PC-9 (cell line): ENCODE measurements at regions of chr1 and their contacts with region 1.

Region 1: GRCh38 chr1:19918057-19918456 is 5.4 kb downstream of the PLA2G2E start:
- DNase-seq: peak; percentile 57 to 75
- H3K4me3 ChIP-seq: no peak overlapping the region
- H3K27ac ChIP-seq: no peak overlapping the region
- H3K4me1 ChIP-seq: peaks cover 26% of the 10 kb centered on the region
- H3K27me3 ChIP-seq: no peaks in the 10 kb centered on the region
- CTCF ChIP-seq: peak; percentile 87

Region 2: GRCh38 chr1:19661721-19662228 is 256.3 kb before region 1 on chr1:
- CTCF ChIA-PET with region 1: no interaction called
- POLR2A ChIA-PET with region 1: no interaction called
- intact Hi-C with region 1: loop called (anchors 5 kb)
- DNase-seq: peak in 1 of 2 experiments; percentile 28
- H3K4me3 ChIP-seq: no peak overlapping the region
- H3K27ac ChIP-seq: no peak overlapping the region
- H3K4me1 ChIP-seq: no peaks in the 10 kb centered on the region
- H3K27me3 ChIP-seq: no peaks in the 10 kb centered on the region
- CTCF ChIP-seq: peak; percentile 72

Region 3: DNA sequence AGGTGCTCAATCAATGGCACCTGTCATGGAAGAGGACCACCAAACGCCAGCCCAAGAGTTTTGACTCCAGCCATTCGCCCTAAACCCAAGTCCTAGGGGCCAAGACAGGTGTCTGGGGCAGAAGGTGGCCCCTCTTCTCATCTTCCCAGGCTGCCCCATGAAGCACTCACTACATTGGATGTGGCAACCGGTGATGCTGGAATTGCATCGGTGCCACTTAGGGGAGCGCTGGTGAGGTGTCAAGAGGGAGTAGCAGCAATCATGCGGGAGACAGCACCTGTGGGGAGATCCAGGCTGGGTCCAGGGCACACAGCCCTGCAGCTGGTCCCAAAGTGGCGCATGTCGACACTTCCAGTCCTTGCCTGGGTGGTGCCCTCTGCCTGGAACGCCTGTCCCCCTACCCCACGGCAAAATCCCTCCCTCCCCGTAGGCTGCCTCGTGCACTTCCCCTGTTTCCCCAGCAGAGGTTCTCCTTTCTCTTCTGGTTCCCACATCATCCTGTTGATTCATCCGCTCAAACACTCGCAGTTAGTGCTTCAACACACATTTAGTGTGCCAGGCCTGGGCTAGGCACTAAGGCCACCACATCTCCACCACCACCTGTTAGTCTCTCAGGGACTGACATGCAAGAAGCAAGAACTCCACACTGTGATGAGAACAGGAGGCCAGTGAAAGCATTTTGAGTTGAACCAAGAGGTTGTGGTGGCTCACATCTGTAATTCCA is 182.7 kb after region 1 on chr1:
- CTCF ChIA-PET with region 1: no interaction called
- POLR2A ChIA-PET with region 1: no interaction called
- intact Hi-C with region 1: loop called (anchors 2 kb)
- DNase-seq: peak; percentile 45 to 58
- H3K4me3 ChIP-seq: no peak overlapping the region
- H3K27ac ChIP-seq: no peak overlapping the region
- H3K4me1 ChIP-seq: peaks cover 31% of the 10 kb centered on the region
- H3K27me3 ChIP-seq: no peaks in the 10 kb centered on the region
- CTCF ChIP-seq: peak; percentile 82

Region 4: GRCh38 chr1:20493839-20494608 is 576.0 kb after region 1 on chr1:
- CTCF ChIA-PET with region 1: no interaction called
- POLR2A ChIA-PET with region 1: no interaction called
- intact Hi-C with region 1: loop called (anchors 1 kb)
- DNase-seq: peak; percentile 80 to 91
- H3K4me3 ChIP-seq: no peak overlapping the region
- H3K27ac ChIP-seq: peak overlapping the region; percentile 97
- H3K4me1 ChIP-seq: peaks cover 39% of the 10 kb centered on the region
- H3K27me3 ChIP-seq: no peaks in the 10 kb centered on the region
- CTCF ChIP-seq: peak; percentile 93

Region 5: GRCh38 chr1:20633190-20634064 is 715.4 kb after region 1 on chr1 and contains the start of gene PINK1:
- CTCF ChIA-PET with region 1: no interaction called
- POLR2A ChIA-PET with region 1: no interaction called
- intact Hi-C with region 1: loop called (anchors 10 kb)
- DNase-seq: peak; percentile 52 to 87
- H3K4me3 ChIP-seq: peak within 1 kb of the TSS; percentile 58
- H3K27ac ChIP-seq: 0 out of 2 replicates have a peak within 1 kb of the TSS, but pooled peaks have one; percentile 26
- H3K4me1 ChIP-seq: peaks cover 19% of the 10 kb centered on the region
- H3K27me3 ChIP-seq: no peaks in the 10 kb centered on the region
- CTCF ChIP-seq: peak; percentile 91
- total RNA-seq, gene PINK1: 46.5 and 48.6 TPM in 2 replicates